ENCODE measurements at regions of chr11 and their contacts with region 1.

Region 1: DNA sequence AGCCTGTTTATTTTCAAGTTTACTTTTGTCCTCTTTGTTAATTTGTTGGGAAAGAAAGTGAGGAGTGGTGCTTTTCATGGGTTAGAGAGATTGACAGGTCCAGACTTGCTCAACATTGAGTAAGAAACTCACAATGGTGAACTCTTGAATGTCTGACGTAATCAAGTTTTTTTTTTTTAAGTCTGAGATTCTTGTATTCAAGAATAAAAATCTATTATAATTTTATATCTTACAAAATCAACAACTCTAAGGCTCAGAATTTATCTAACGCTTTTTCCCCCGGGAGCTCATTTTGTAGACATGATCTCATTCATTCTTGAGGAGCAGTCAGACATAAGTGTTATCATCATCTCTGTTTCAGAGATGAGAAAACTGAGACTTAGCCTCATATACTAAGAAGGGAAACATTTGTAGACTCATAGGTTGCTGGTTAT is 39.1 kb upstream of the SPTBN2 start:
- DNase-seq: no peak
- ATAC-seq: peak; percentile 74

Region 2: DNA sequence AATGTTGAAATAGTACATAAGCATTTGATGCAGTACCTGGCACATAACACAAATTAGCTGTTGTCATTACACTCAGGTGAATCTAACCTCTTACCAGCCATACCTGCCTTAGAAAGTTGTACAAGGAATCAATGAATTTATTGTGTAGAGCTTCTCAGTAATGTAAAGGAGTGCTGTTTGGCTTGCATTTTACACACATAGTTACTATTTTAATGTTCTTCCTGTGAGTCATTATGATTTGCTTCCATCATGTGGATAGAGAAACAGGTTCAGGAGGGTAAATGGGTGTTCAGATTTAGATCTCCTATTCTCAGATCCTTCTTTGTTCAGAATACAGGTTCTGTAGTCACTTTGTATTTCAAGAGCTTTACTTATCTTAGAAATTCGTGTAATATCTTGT is 47.5 kb after region 1 on chr11:
- intact Hi-C with region 1: loop called (anchors 10 kb)
- DNase-seq: no peak
- ATAC-seq: no peak